ENCODE measurements at regions of chr22 and their contacts with region 1.

Region 1: DNA sequence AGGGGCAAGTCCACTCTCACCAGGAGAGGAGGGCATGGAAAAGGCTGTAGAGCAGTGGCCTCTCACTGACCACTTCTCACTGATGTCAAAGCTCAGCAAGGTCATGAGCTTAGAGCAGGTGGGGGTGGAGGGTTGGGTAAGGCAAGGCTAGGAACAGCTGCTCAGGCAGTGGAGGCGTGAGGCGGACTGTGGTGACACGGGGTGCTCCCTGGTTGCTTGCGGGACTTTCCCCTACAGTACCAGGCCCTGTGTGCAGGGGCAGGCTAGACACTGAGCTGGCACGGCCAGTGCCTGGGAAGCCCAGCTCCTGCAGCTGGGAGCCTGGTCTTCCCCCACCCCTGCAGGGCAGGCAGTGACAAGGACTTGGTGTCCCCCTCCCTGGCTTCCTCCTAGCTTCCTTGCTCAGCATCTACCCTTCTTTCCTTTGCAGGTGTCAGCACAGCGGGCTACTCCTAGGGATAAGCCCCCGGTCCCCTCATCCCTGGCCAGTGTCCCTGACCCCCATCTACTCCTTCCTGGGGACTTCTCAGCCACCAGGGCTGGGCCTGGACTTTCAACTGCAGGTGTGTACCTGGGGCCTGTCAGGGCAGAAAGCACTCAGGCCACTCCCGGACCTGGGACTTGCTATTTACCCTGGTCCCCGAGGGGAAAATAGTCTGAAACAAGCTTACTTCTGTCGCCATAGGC is 45.6 kb downstream of the PISD start:
- DNase-seq: peak; percentile 74
- ATAC-seq: peak; percentile 80
- H3K4me3 Mint-ChIP-seq: no peak overlapping the region
- H3K27ac Mint-ChIP-seq: peak overlapping the region; percentile 85
- H3K4me1 Mint-ChIP-seq: peaks cover 29% of the 10 kb centered on the region
- H3K27me3 Mint-ChIP-seq: no peaks in the 10 kb centered on the region
- CTCF ChIP-seq: no peak

Region 2: GRCh38 chr22:31605851-31606585 is 10.4 kb before region 1 on chr22:
- CTCF ChIA-PET with region 1: no interaction called
- POLR2A ChIA-PET with region 1: interaction called, 11 read pairs
- intact Hi-C with region 1: no loop called
- DNase-seq: no peak
- ATAC-seq: no peak
- H3K4me3 Mint-ChIP-seq: no peak overlapping the region
- H3K27ac Mint-ChIP-seq: no peak overlapping the region
- H3K4me1 Mint-ChIP-seq: no peaks in the 10 kb centered on the region
- H3K27me3 Mint-ChIP-seq: no peaks in the 10 kb centered on the region
- CTCF ChIP-seq: no peak